Activated naive CD4-positive, alpha-beta T cell treated with anti-CD3 and anti-CD28 coated beads, Interleukin-2, amount 10 ng/mL, durations not matched to agents 7 days and 5 days (primary cell): ENCODE measurements at regions of chr1 and their contacts with region 1.

Region 1: GRCh38 chr1:111507411-111508201 is 4.2 kb upstream of the ADORA3 start:
- DNase-seq: peak; percentile 76
- H3K4me3 Mint-ChIP-seq: peak overlapping the region; percentile 61
- H3K27ac Mint-ChIP-seq: peak overlapping the region; percentile 95
- H3K4me1 Mint-ChIP-seq: peaks cover 58% of the 10 kb centered on the region
- H3K27me3 Mint-ChIP-seq: no peaks in the 10 kb centered on the region

Region 2: DNA sequence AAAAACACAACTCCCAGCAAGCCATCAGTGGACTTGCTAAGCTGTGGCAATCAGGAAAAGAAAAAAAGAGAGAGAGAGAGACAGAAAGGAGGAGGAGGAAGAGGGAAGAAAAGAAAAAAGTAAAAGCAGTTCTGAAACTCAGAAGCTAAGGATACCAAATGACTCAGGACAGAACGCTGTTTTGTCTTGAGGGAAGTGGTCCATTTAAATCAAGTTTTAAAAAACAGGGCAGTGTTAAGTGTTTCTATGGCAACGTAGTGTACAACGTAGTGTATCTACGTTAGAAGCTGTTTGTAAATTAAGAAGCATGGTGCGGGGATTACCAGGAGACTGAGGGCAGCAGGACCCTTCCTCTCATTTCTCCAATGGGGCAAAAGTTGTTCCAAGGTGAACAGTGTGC is 10.0 kb before region 1 on chr1:
- CTCF ChIA-PET with region 1: interaction called, 29 read pairs
- DNase-seq: no peak
- H3K4me3 Mint-ChIP-seq: no peak overlapping the region
- H3K27ac Mint-ChIP-seq: no peak overlapping the region
- H3K4me1 Mint-ChIP-seq: peaks cover 26% of the 10 kb centered on the region
- H3K27me3 Mint-ChIP-seq: peaks cover 22% of the 10 kb centered on the region

Region 3: GRCh38 chr1:111615870-111616715 is 108.5 kb after region 1 on chr1:
- CTCF ChIA-PET with region 1: interaction called, 17 read pairs
- DNase-seq: peak; percentile 64
- H3K4me3 Mint-ChIP-seq: peak overlapping the region; percentile 16
- H3K27ac Mint-ChIP-seq: peak overlapping the region; percentile 90
- H3K4me1 Mint-ChIP-seq: peaks cover 48% of the 10 kb centered on the region
- H3K27me3 Mint-ChIP-seq: no peaks in the 10 kb centered on the region

Region 4: DNA sequence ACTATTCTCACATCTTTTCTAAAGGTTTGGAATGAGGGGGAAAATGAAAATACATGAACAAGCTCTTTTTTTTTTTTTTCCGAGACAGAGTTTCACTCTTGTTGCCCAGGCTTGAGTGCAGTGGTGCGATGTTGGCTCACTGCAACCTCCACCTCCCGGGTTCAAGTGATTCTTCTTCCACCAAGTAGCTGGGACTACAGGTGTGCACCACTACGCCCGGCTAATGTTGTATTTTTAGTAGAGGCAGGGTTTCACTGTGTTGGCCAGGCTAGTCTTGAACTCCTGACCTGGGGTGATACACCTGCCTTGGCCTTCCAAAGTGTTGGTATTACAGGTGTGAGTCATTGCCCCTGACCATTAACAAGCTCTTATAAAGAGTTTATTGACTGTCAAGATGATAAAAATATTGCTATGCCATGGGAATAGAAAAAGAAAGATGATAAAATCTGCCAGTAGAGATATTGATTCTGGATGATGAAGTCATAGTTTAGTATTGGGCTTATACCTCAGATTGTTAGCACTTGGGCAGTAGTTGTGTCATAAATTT is 195.0 kb after region 1 on chr1:
- CTCF ChIA-PET with region 1: interaction called, 13 read pairs
- DNase-seq: no peak
- H3K4me3 Mint-ChIP-seq: no peak overlapping the region
- H3K27ac Mint-ChIP-seq: no peak overlapping the region
- H3K4me1 Mint-ChIP-seq: no peaks in the 10 kb centered on the region
- H3K27me3 Mint-ChIP-seq: no peaks in the 10 kb centered on the region

Region 5: GRCh38 chr1:111747282-111747734 is 239.7 kb after region 1 on chr1:
- CTCF ChIA-PET with region 1: interaction called, 63 read pairs
- DNase-seq: peak; percentile 83
- H3K4me3 Mint-ChIP-seq: no peak overlapping the region
- H3K27ac Mint-ChIP-seq: no peak overlapping the region
- H3K4me1 Mint-ChIP-seq: peaks cover 10% of the 10 kb centered on the region
- H3K27me3 Mint-ChIP-seq: peaks cover 17% of the 10 kb centered on the region